Thyroid gland (tissue), 4 donors: ENCODE measurements at regions of chr10 and their contacts with region 1.

Region 1: GRCh38 chr10:119596537-119597404 is at the start of gene TIAL1:
- DNase-seq: peak; percentile 99
- H3K4me3 ChIP-seq: peak within 1 kb of the TSS; percentile 47 to 79 (median 70)
- H3K27ac ChIP-seq: peak within 1 kb of the TSS; percentile 93 to 99 (median 99)
- H3K4me1 ChIP-seq: peaks cover 35 to 39% of the 10 kb centered on the region in 2 donors
- H3K27me3 ChIP-seq: no peaks in the 10 kb centered on the region
- CTCF ChIP-seq: peak in 1 of 6 experiments; percentile 6
- POLR2A ChIP-seq: peak in 1 of 2 donors; percentile 88
- total RNA-seq, gene TIAL1: 89.3 to 119 (median 95.5) TPM

Region 2: DNA sequence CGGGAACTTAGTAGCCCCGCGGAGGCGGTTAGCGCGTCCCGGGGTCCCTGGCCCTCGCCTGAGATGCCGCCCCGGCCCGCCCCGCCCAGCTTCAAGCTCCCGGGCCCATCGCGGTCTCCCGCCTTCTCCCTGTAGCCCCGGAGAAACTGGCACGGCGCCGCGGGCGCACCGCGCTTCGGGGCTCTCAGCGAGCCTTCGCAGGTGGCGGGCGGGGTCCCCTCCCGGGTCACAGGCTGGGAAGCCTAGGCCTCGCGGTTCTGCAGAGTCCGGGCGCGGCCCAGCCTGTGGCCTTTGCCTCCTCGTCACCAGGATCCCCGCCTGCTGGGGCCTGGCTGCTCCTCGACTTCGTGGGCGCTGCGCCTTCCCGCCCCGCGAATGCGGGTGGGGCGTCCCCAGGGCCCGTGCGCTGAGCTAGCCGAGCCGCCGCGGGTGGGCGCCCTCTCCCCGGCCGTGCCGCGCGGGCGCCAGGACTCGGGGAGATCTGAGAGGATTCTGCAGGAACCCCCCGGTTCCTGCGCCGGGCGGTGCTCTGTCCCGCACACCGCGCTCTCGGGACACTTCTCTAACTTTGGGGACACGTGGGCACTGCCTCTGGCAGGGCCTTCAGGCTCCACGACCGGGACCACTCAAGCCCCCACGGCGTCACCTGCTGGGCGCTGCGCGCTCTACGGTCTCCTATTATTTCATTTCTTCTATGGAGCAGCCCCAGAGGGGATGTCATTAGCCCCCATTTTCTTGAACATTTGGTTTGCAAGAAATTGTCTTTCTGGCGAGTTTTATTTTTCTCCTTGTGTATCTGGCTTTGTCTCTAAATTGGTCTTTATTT is 53.6 kb before region 1 on chr10:
- intact Hi-C with region 1: loop called (anchors 10 kb)
- DNase-seq: peak; percentile 55 to 60
- H3K4me3 ChIP-seq: peak overlapping the region; percentile 14 to 72 (median 68)
- H3K27ac ChIP-seq: peak overlapping the region; percentile 9 to 89 (median 88)
- H3K4me1 ChIP-seq: peaks cover 20 to 37% of the 10 kb centered on the region in 2 donors
- H3K27me3 ChIP-seq: no peaks in the 10 kb centered on the region
- CTCF ChIP-seq: peak in 5 of 6 experiments; percentile 10 to 44 (median 33)
- POLR2A ChIP-seq: no peak

Region 3: DNA sequence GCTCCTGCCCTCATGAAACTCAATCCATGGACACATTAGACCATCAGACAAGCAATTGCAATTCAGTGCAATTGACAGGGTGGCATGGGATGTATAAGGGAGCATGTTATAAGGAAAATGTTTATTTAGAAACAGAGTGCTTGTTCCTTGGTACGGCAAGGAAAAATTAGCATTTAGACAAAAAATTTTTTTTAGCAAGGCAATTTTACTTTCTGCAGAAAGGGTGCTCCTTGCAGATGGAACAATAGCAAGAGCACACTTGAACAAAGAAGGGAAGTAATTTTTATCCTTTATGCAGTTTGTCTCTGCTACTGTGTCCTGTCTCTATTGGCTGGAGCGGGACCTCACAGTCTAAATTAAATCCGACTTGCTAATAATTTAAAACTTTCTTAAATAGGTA is 48.2 kb after region 1 on chr10:
- intact Hi-C with region 1: loop called (anchors 5 kb)
- DNase-seq: no peak
- H3K4me3 ChIP-seq: no peak overlapping the region
- H3K27ac ChIP-seq: no peak overlapping the region
- H3K4me1 ChIP-seq: no peaks in the 10 kb centered on the region
- H3K27me3 ChIP-seq: no peaks in the 10 kb centered on the region
- CTCF ChIP-seq: no peak
- POLR2A ChIP-seq: no peak